ENCODE measurements at regions of chr2 and their contacts with region 1.

Region 1: DNA sequence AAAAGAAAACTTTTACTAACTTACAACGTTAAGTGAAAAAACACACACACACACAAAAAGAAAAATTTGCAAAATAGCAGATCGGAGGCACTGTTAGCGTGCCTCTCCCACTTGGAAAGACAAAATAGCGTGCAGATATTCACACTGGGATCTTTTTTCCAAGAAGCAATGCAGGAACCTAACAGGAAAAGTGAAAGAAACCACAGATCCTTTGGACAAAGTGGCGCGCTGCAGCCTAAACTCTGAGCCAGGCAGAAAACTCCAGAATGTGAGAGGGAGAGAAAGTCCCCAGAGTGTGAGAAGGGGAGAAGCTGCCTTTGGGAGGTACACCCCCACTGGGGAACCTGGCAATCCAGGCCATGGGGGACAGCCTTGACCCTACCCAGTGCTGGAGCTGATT is 70.7 kb upstream of the SERPINE2 start:
- DNase-seq: no peak
- ATAC-seq: peak; percentile 26

Region 2: GRCh38 chr2:224173933-224174332 is 64.2 kb after region 1 on chr2:
- intact Hi-C with region 1: loop called (anchors 2 kb)
- DNase-seq: no peak
- ATAC-seq: no peak

Measured in sciatic nerve (tissue), 2 donors.